Lower leg skin (tissue), 4 donors: ENCODE measurements at regions of chr17 and their contacts with region 1.

Region 1: GRCh38 chr17:10844621-10845387 is 6.9 kb upstream of the PIRT start:
- DNase-seq: peak; percentile 63 to 97
- H3K4me3 ChIP-seq: peak overlapping the region; percentile 4
- CTCF ChIP-seq: peak in 1 of 3 donors; percentile 83
- POLR2A ChIP-seq: no peak

Region 2: DNA sequence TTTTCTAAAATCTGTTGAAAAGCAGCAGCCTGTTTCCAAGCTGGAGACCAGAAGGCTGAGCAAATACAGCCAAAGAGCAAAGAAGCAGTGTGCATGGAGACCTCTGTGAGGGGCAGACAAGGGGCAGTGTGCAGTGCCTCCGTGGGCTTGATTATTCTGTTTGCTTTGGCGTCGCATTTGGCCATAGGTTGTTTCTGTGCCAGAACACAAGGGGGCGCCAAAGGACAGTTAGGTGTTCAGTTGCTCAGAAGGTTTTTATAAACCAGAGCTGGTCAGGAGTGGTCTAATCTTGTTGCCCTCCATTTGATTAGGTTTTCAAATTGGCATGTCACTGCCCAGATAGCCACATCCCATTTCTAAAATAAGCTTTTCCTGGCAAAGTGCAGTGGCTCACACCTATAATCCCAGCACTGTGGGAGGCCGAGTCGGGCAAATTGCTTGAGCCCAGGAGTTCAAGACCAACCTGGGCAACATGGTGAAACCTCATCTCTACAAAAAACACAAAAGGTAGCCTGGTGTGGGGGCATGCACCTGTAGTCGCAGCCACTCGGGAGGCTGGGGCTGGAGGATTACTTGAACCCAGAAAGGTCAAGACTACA is 198.3 kb before region 1 on chr17:
- intact Hi-C with region 1: loop called (anchors 10 kb)
- DNase-seq: peak; percentile 39 to 92
- H3K4me3 ChIP-seq: no peak overlapping the region
- CTCF ChIP-seq: peak in 1 of 3 donors; percentile 50
- POLR2A ChIP-seq: no peak

Region 3: DNA sequence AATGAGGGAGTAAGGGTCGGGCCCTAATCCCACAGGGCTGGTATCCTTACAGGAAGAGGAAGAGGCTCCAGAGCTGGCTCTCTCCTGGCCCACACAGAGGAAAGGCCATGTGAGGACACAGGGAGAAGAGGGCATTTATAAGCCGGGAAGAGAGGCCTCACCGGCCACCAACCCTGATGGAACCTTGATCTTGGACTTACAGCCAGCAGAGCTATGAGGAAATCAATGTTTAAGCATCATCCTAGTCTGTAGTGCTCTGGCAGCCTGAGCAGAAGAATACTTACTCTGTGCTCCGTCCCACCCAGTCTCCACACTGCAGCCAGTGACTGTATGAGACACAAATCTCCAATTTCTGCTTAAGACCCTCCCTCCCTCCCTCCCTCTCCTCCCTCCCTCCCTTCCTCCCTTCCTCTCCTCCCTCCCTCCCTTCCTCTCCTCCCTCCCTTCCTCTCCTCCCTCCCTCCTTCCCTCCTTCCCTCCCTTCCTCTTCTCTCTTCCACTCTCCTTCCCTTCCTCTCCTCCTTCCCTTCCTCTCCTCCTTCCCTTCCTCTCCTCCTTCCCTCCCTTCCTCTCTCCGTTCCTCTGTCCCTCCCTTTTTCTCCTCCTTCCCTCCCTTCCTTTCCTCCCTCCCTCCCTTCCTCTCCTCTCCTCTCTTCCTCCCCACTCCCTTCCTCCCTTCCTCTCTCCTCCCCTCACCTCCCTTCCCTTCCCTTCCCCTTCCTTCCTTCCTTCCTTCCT is 106.1 kb before region 1 on chr17:
- intact Hi-C with region 1: loop called (anchors 2 kb)
- DNase-seq: peak in 1 of 2 donors; percentile 85
- H3K4me3 ChIP-seq: no peak overlapping the region
- CTCF ChIP-seq: no peak
- POLR2A ChIP-seq: no peak